ENCODE measurements at regions of chr7 and their contacts with region 1.

Region 1: GRCh38 chr7:114539575-114539974 is 125.0 kb downstream of the FOXP2 start:
- DNase-seq: no peak
- H3K4me3 ChIP-seq: no peak overlapping the region
- H3K27ac ChIP-seq: no peak overlapping the region
- H3K4me1 ChIP-seq: peaks cover 0 to 2% of the 10 kb centered on the region in 2 donors
- H3K27me3 ChIP-seq: no peaks in the 10 kb centered on the region
- CTCF ChIP-seq: peak in 2 of 3 experiments; percentile 24 to 33

Region 2: GRCh38 chr7:114414156-114415063 is 125.2 kb before region 1 on chr7 and contains the start of gene FOXP2:
- intact Hi-C with region 1: loop called (anchors 10 kb)
- DNase-seq: no peak
- H3K4me3 ChIP-seq: peak within 1 kb of the TSS; percentile 6 to 66
- H3K27ac ChIP-seq: peak within 1 kb of the TSS; percentile 62 to 68
- H3K4me1 ChIP-seq: peaks cover 0 to 3% of the 10 kb centered on the region in 2 donors
- H3K27me3 ChIP-seq: no peaks in the 10 kb centered on the region
- CTCF ChIP-seq: no peak
- total RNA-seq, gene FOXP2: 11.0 TPM

Measured in ascending aorta (tissue), 2 donors.